ENCODE measurements at regions of chr1 and their contacts with region 1.

Region 1: GRCh38 chr1:983799-984473 is 2.0 kb upstream of the PERM1 start:
- DNase-seq: no peak
- H3K4me3 ChIP-seq: peak overlapping the region in 1 of 2 donors; percentile 21
- H3K27ac ChIP-seq: no peak overlapping the region
- H3K4me1 ChIP-seq: no peaks in the 10 kb centered on the region
- H3K27me3 ChIP-seq: no peaks in the 10 kb centered on the region
- CTCF ChIP-seq: peak; percentile 53 to 99 (median 98)

Region 2: GRCh38 chr1:1063945-1064831 is 80.3 kb after region 1 on chr1:
- intact Hi-C with region 1: loop called (anchors 1 kb)
- DNase-seq: no peak
- H3K4me3 ChIP-seq: no peak overlapping the region
- H3K27ac ChIP-seq: no peak overlapping the region
- H3K4me1 ChIP-seq: peaks cover 14 to 19% of the 10 kb centered on the region in 2 donors
- H3K27me3 ChIP-seq: peaks cover 16% of the 10 kb centered on the region
- CTCF ChIP-seq: peak; percentile 73 to 89 (median 82)